ENCODE measurements at regions of chr6 and their contacts with region 1.

Region 1: GRCh38 chr6:152982768-152983636 is at the start of gene FBXO5:
- DNase-seq: peak; percentile 98
- H3K4me3 Mint-ChIP-seq: peak within 1 kb of the TSS; percentile 97
- H3K27ac Mint-ChIP-seq: peak within 1 kb of the TSS; percentile 100
- H3K4me1 Mint-ChIP-seq: peaks cover 38% of the 10 kb centered on the region
- H3K27me3 Mint-ChIP-seq: no peaks in the 10 kb centered on the region
- total RNA-seq, gene FBXO5: 41.8 to 42.7 TPM

Region 2: DNA sequence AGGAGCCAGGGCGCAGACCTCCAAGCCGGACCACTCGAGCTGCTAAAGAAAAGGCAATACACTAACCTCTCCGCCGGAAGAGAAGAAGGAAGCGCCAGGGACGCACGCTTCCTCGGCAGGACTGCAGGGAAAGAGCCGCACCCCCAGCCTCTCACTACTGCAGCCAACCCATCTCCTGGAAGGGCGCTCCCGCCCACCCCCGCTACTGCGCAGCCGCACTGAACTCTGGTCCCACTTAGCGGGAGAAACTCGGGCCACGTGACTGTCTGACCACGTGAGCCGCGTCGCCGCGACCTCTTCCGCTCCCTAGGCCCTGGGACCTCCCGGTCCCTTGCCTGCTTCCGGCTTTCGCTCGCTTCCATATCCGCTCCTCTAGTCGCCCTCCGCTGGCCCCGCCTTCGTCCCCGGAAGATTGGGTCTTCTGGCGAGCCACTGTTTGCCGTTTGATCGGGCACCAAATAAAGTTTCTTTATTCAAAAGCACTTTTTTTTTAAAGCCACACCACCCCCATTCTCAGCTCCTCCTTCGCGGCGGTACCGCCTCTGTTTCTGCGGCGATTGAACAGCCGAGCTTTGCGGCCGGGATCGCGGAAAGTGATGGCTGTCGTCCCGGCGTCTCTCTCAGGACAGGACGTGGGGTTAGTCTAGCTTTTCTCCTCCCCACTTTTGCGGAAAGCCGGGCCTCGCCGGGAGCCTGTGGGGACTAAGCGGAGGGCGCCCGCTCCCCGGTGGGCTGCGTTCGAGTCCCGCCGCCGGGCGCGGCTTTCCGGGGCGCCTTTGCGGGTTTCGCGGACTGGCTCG is 1530.9 kb before region 1 on chr6 and contains the start of gene RMND1:
- CTCF ChIA-PET with region 1: no interaction called
- POLR2A ChIA-PET with region 1: no interaction called
- intact Hi-C with region 1: loop called (anchors 2 kb)
- DNase-seq: peak; percentile 100
- H3K4me3 Mint-ChIP-seq: peak within 1 kb of the TSS; percentile 94
- H3K27ac Mint-ChIP-seq: peak within 1 kb of the TSS; percentile 78
- H3K4me1 Mint-ChIP-seq: peaks cover 29% of the 10 kb centered on the region
- H3K27me3 Mint-ChIP-seq: peaks cover 3% of the 10 kb centered on the region
- total RNA-seq, gene RMND1: 22.6 to 23.0 TPM

Region 3: DNA sequence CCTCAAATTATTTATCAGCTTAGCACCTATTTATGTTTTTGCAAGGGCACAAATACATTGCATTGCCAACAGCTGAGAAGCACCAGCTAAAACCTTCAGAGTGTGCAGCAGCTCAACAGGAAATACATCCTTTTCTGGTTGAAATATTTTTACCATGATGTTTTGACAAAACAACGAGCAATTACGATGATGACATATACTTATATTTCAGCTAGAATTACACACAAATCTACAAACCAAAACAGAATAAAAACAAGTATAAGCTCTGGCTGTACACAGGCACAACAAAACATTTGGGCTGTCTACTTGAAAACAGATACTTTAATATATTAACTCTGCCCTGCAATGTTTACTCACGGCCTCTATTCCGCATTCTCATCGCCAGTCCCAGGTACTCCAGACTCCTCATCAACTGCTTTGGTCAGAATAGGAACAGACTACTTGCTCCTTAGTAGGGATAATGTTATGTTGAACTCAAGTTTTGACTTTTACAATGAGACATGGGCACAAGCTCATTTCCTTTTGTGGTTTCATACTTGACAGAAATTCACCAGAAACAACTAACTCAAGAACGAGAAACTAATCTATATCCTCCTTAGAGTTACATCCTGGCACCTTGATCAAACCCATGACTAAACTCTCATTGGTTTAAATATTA is 798.0 kb before region 1 on chr6:
- CTCF ChIA-PET with region 1: no interaction called
- POLR2A ChIA-PET with region 1: no interaction called
- intact Hi-C with region 1: loop called (anchors 5 kb)
- DNase-seq: peak; percentile 39
- H3K4me3 Mint-ChIP-seq: peak overlapping the region; percentile 78
- H3K27ac Mint-ChIP-seq: peak overlapping the region; percentile 94
- H3K4me1 Mint-ChIP-seq: peaks cover 73% of the 10 kb centered on the region
- H3K27me3 Mint-ChIP-seq: no peaks in the 10 kb centered on the region

Region 4: GRCh38 chr6:153002607-153003365 is 19.8 kb after region 1 on chr6 and contains the start of gene MTRF1L:
- CTCF ChIA-PET with region 1: interaction called, 3 read pairs
- POLR2A ChIA-PET with region 1: interaction called, 9 read pairs
- intact Hi-C with region 1: loop called (anchors 1 kb)
- DNase-seq: peak; percentile 95
- H3K4me3 Mint-ChIP-seq: peak within 1 kb of the TSS; percentile 98
- H3K27ac Mint-ChIP-seq: peak within 1 kb of the TSS; percentile 98
- H3K4me1 Mint-ChIP-seq: peaks cover 30% of the 10 kb centered on the region
- H3K27me3 Mint-ChIP-seq: no peaks in the 10 kb centered on the region
- total RNA-seq, gene MTRF1L: 16.9 to 20.1 TPM

Region 5: DNA sequence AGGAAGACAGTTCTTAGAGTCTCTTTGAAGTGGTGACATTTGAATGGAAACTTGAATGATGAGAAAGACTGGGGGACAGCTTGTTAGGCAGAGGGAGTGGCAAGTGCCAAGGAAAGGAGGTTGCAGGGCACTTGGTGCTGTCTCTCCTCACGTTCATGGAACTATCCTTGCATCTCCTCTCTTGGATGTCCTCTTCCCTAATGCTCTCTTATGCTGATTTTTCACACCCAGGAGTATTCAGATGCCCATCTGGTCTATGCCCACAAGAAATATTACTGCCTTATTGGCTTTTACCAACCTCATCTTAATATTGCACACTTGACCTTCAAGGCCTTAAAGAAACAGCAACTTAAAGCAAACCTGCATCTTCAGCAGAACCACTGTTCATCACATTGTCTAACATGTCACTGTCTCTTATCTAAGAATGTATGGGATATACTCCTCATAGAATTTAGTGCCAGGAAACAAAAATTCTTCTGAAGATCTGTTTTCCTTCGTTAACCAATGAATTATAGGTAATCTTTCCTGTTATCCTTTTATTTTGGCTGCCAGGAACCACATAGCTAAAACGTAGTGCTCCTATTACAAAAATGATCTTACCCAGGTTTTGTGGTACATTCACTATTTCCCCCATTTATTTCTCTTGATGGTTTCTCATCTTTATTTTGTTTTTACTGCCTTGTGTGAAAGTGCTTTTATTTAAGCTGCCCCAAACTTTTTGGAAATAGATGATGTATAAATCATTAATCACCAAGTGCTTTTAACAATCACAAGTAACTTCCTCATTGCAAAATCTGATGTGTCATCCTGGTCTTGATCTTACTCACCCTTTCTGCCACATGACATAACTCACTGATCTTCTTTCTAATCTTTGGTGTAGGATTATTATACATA is 135.2 kb after region 1 on chr6:
- CTCF ChIA-PET with region 1: no interaction called
- POLR2A ChIA-PET with region 1: no interaction called
- intact Hi-C with region 1: no loop called
- DNase-seq: no peak
- H3K4me3 Mint-ChIP-seq: no peak overlapping the region
- H3K27ac Mint-ChIP-seq: no peak overlapping the region
- H3K4me1 Mint-ChIP-seq: peaks cover 3% of the 10 kb centered on the region
- H3K27me3 Mint-ChIP-seq: peaks cover 7% of the 10 kb centered on the region

Region 6: DNA sequence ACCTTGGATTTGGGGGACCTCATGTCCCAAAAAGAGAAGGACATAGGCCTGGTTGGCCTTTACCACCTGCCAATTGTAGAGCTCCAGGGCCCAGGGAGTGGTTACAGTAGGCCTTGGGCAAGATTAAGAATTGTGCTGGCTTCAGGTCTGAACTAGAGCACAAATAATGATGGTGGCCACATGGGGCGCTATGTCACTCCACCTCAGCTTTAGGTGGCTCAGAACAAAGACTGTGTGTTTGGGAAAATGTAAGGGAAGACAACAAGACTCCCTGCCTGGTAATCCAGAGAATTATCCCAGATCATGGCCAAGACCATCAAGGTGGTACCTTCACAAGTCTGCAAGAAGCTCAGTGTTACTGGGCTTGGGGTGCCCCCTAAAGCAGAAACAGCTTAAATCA is 831.1 kb after region 1 on chr6:
- CTCF ChIA-PET with region 1: no interaction called
- POLR2A ChIA-PET with region 1: no interaction called
- intact Hi-C with region 1: no loop called
- DNase-seq: no peak
- H3K4me3 Mint-ChIP-seq: no peak overlapping the region
- H3K27ac Mint-ChIP-seq: no peak overlapping the region
- H3K4me1 Mint-ChIP-seq: no peaks in the 10 kb centered on the region
- H3K27me3 Mint-ChIP-seq: no peaks in the 10 kb centered on the region

Region 7: GRCh38 chr6:154229786-154230185 is 1246.8 kb after region 1 on chr6:
- CTCF ChIA-PET with region 1: no interaction called
- POLR2A ChIA-PET with region 1: no interaction called
- intact Hi-C with region 1: loop called (anchors 5 kb)
- DNase-seq: peak; percentile 88
- H3K4me3 Mint-ChIP-seq: peak overlapping the region; percentile 71
- H3K27ac Mint-ChIP-seq: peak overlapping the region; percentile 89
- H3K4me1 Mint-ChIP-seq: peaks cover 80% of the 10 kb centered on the region
- H3K27me3 Mint-ChIP-seq: no peaks in the 10 kb centered on the region

Region 8: DNA sequence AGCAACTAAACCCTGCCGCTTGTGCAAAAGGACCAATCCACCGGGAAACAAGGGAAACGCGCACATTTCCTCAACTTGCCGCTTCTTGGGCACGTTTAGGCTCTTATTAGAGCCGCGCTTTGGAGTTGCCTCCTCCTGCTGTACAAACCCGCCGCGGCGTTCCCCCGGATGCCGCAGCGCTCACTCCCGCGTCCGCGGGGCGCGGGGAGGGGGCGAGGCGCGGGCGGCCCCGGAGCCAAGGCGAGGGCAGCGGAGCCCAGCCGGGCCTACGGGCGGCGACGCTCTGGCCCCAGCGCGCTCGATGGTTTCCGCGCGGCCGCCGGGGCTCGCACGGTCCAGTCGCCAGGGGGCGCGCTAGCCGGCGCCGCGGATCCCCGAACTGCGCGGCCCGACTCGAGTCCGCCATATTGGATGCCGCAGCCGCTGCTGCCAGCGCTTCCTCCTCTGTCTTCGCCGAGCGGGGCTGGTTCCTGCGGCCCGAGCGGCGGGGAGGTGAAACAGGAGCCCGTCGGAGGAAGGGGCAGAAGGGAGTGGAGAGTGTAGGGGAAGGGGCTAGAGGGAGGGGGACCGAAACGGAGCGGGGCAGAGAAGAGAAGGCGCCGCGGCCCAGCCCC is 1750.1 kb after region 1 on chr6 and contains the start of gene SCAF8:
- CTCF ChIA-PET with region 1: no interaction called
- POLR2A ChIA-PET with region 1: no interaction called
- intact Hi-C with region 1: loop called (anchors 5 kb)
- DNase-seq: peak; percentile 86
- H3K4me3 Mint-ChIP-seq: peak within 1 kb of the TSS; percentile 85
- H3K27ac Mint-ChIP-seq: peak within 1 kb of the TSS; percentile 84
- H3K4me1 Mint-ChIP-seq: peaks cover 34% of the 10 kb centered on the region
- H3K27me3 Mint-ChIP-seq: no peaks in the 10 kb centered on the region
- total RNA-seq, gene SCAF8: 30.1 to 31.7 TPM